Esophagus squamous epithelium (tissue), 5 donors: ENCODE measurements at regions of chr3 and their contacts with region 1.

Region 1: GRCh38 chr3:12841149-12841970 is at the start of gene RPL32:
- DNase-seq: peak; percentile 39
- H3K4me3 ChIP-seq: peak within 1 kb of the TSS; percentile 66 to 96 (median 88)
- H3K27ac ChIP-seq: peak within 1 kb of the TSS; percentile 89 to 97 (median 92)
- H3K4me1 ChIP-seq: peaks cover 18 to 43% (median 32%) of the 10 kb centered on the region in 3 donors
- H3K27me3 ChIP-seq: no peaks in the 10 kb centered on the region
- CTCF ChIP-seq: peak; percentile 73 to 93 (median 84)
- POLR2A ChIP-seq: peak in 3 of 4 donors; percentile 82 to 86 (median 83)
- total RNA-seq, gene RPL32: 657 to 937 (median 873) TPM

Region 2: GRCh38 chr3:12706504-12707253 is 134.7 kb before region 1 on chr3:
- intact Hi-C with region 1: loop called (anchors 10 kb)
- DNase-seq: no peak
- H3K4me3 ChIP-seq: no peak overlapping the region
- H3K27ac ChIP-seq: no peak overlapping the region
- H3K4me1 ChIP-seq: peaks cover 0 to 26% (median 0%) of the 10 kb centered on the region in 3 donors
- H3K27me3 ChIP-seq: no peaks in the 10 kb centered on the region
- CTCF ChIP-seq: peak; percentile 14 to 87 (median 68)
- POLR2A ChIP-seq: no peak